ENCODE measurements at regions of chr19 and their contacts with region 1.

Region 1: DNA sequence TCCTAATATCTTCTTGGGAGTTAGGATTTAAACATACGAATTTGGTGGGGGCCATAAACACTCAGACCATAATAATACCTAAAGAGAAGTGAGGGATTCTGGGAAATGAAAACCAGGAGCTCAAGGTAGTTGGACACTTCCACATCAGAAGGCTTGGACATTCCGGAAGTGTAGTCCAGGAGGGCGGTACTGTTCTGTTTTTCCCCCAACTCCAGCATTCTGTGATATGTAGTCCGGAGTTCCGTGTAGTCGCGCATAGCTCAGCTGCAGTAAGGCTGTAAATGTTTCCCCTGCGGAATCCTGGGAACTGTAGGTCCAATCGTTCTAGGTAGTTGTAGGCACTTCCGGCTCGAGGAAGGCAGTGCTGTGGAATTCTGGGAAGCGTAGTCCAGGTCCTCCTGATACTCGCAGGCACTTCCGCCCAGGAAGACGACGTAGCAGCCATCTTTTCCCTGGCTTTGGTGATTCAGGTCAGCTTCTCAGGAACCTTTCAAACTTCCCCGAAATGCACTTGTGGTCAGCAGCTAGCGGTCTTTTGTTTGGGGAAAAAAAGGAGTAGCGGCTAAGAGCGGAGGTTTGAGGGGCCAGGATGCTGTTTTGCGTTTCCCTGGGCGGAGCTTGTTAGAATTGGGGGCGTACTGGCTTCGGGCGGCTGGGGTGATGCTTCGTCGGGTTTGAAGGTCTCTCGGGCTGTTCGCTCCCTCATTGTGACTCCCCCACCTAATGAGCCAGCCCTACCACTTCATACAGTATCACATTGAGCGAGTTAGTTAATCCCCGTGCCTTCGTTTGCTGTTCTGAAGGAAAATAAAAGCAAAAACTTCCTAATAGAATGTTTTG is at the start of gene ZNF226:
- DNase-seq: peak; percentile 88 to 94 (median 93)
- ATAC-seq: peak; percentile 99 to 100 (median 100)
- H3K4me3 ChIP-seq: peak within 1 kb of the TSS; percentile 50 to 92 (median 73)
- H3K27ac ChIP-seq: peak within 1 kb of the TSS; percentile 59 to 91 (median 88)
- H3K4me1 ChIP-seq: peaks cover 0 to 22% (median 11%) of the 10 kb centered on the region in 12 donors
- H3K27me3 ChIP-seq: no peaks in the 10 kb centered on the region
- CTCF ChIP-seq: no peak
- POLR2A ChIP-seq: peak in 1 of 2 donors; percentile 76
- total RNA-seq, gene ZNF226: 12.2 to 29.2 (median 21.1) TPM

Region 2: GRCh38 chr19:43983912-43984686 is 180.8 kb before region 1 on chr19 and contains the start of gene ZNF155:
- intact Hi-C with region 1: loop called in 1 of 10 experiments (anchors 10 kb)
- DNase-seq: peak; percentile 92 to 97 (median 96)
- ATAC-seq: peak; percentile 99 to 100 (median 100)
- H3K4me3 ChIP-seq: peak within 1 kb of the TSS; percentile 51 to 89 (median 72)
- H3K27ac ChIP-seq: peak within 1 kb of the TSS in 11 of 12 donors; percentile 63 to 91 (median 76)
- H3K4me1 ChIP-seq: peaks cover 0 to 15% (median 7%) of the 10 kb centered on the region in 12 donors
- H3K27me3 ChIP-seq: no peaks in the 10 kb centered on the region
- CTCF ChIP-seq: no peak
- POLR2A ChIP-seq: no peak
- total RNA-seq, gene ZNF155: 4.0 to 7.7 (median 6.6) TPM

Region 3: DNA sequence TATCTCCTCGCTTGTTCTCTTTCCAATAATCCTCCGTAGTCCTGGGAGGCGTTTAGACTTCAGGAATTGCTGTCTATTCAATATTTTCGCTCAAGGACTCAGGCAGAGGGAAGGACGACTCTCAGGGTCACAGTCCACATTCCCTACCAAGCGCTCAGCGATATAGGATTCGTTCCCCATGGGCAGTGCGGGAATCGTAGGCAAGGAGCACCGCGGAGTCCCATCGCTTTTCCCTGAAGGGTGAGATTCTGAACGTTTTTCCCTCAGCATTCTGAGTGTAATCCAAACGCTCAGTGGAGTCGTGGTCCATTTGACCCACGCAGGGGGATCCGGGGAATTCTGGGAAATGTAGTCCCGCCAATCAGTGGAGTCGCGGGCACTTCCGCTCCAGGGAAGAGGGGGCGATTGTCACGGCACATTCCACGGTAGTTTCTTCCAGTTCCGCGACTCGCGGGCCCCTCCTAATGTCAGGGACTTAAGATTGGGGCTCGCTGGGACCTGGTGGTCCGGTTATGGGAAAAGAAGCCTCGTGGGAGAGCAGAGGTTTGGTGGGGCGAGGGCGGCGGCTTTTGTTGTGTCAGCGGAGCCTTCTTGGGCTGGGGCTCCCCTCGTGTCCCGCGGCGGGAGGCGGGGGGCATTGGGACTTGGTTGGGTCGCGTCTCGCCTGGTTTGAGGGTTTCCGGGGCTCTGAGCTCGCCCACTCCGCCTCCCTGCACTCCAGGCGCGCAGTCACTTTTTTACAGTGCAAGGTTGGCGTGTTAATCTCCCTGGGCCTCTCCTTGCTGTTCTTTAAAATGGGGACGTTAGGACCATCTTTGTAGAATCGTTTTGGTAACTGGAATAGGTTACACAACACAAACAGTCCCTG is 23.5 kb before region 1 on chr19 and contains the start of gene ZNF234:
- intact Hi-C with region 1: loop called in 2 of 10 experiments (anchors 1 to 2 kb)
- DNase-seq: peak; percentile 85 to 91 (median 90)
- ATAC-seq: peak; percentile 93 to 99 (median 98)
- H3K4me3 ChIP-seq: peak within 1 kb of the TSS; percentile 62 to 98 (median 89)
- H3K27ac ChIP-seq: peak within 1 kb of the TSS; percentile 61 to 90 (median 84)
- H3K4me1 ChIP-seq: peaks cover 0 to 19% (median 12%) of the 10 kb centered on the region in 12 donors
- H3K27me3 ChIP-seq: no peaks in the 10 kb centered on the region
- CTCF ChIP-seq: peak in 2 of 12 donors; percentile 8 to 17
- POLR2A ChIP-seq: peak in 1 of 2 donors; percentile 54
- total RNA-seq, gene ZNF234: 4.6 to 12.8 (median 9.4) TPM

Region 4: GRCh38 chr19:44207126-44207803 is 42.4 kb after region 1 on chr19:
- intact Hi-C with region 1: loop called in 7 of 10 experiments (anchors 2 to 5 kb)
- DNase-seq: peak; percentile 91 to 94 (median 93)
- ATAC-seq: peak; percentile 96 to 98 (median 97)
- H3K4me3 ChIP-seq: peak overlapping the region; percentile 47 to 86 (median 76)
- H3K27ac ChIP-seq: peak overlapping the region; percentile 84 to 96 (median 92)
- H3K4me1 ChIP-seq: peaks cover 0 to 15% (median 7%) of the 10 kb centered on the region in 12 donors
- H3K27me3 ChIP-seq: peaks cover 0 to 5% (median 0%) of the 10 kb centered on the region in 9 donors
- CTCF ChIP-seq: no peak
- POLR2A ChIP-seq: peak in 1 of 2 donors; percentile 47

Region 5: GRCh38 chr19:44212250-44212865 is 47.5 kb after region 1 on chr19 and contains the start of gene ZNF227:
- intact Hi-C with region 1: loop called in 7 of 10 experiments (anchors 2 to 5 kb)
- DNase-seq: peak; percentile 92 to 96 (median 95)
- ATAC-seq: peak; percentile 96 to 98 (median 98)
- H3K4me3 ChIP-seq: peak within 1 kb of the TSS; percentile 47 to 95 (median 76)
- H3K27ac ChIP-seq: peak within 1 kb of the TSS; percentile 66 to 92 (median 85)
- H3K4me1 ChIP-seq: peaks cover 0 to 27% (median 18%) of the 10 kb centered on the region in 12 donors
- H3K27me3 ChIP-seq: no peaks in the 10 kb centered on the region
- CTCF ChIP-seq: no peak
- POLR2A ChIP-seq: peak in 1 of 2 donors; percentile 53
- total RNA-seq, gene ZNF227: 4.7 to 20.5 (median 11.0) TPM

Region 6: GRCh38 chr19:44689056-44689895 is 524.4 kb after region 1 on chr19:
- intact Hi-C with region 1: no loop called
- DNase-seq: peak; percentile 67 to 87 (median 75)
- ATAC-seq: peak; percentile 21 to 63 (median 46)
- H3K4me3 ChIP-seq: no peak overlapping the region
- H3K27ac ChIP-seq: peak overlapping the region in 1 of 12 donors; percentile 29
- H3K4me1 ChIP-seq: peaks cover 0 to 65% (median 22%) of the 10 kb centered on the region in 12 donors
- H3K27me3 ChIP-seq: no peaks in the 10 kb centered on the region
- CTCF ChIP-seq: peak; percentile 90 to 96 (median 94)
- POLR2A ChIP-seq: no peak

Measured in heart left ventricle (tissue), 16 donors.